SK-N-SH (cell line): ENCODE measurements at regions of chr6 and their contacts with region 1.

Region 1: DNA sequence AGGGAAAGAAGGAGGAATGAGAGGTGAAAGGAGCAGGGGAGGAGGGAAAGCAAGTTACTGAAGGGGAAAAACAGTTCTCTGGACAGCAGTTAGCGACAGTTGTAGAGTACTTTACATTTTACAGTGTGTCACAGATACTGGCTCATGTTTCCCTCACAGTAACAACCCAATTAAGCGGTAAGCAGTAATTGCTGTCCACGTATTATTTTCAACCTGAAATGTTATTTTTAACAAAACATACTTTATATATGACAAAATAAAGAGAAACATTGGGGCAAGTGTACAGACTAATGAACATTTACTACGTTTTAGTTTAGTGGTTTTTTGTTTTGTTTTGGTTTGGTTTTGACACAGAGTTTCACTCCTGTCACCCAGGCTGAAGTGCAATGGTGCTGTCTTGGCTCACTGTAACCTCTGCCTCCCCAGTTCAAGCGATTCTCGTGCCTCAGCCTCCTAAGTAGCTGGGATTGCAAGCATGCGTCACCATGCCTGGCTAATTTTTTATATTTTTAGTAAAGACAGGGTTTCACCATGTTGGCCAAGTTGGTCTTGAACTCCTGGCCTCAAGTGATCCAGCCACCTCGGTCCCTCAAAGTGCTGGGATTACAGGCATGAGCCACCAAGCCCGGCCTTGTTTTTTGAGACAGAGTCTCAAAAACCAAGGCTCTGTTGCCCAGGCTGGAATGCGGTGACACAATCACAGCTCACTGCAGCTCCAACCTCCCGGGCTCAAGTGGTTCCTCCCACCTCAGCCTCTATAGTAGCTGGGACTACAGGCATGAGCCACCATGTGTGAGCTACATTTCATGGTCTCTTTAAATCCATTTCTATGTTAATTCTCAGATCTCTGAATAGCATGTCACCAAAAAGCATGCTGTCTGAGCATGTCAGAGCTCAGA is 22.6 kb upstream of the BTN3A2 start:
- DNase-seq: no peak
- H3K4me3 ChIP-seq: peak overlapping the region; percentile 16 to 48; a peak in 3 of 4 replicates
- H3K27ac ChIP-seq: no peak overlapping the region
- H3K4me1 ChIP-seq: no peaks in the 10 kb centered on the region
- H3K27me3 ChIP-seq: no peaks in the 10 kb centered on the region
- CTCF ChIP-seq: no peak
- EP300 ChIP-seq: no peak
- RAD21 ChIP-seq: no peak

Region 2: GRCh38 chr6:26322645-26323482 is 19.5 kb before region 1 on chr6:
- CTCF ChIA-PET with region 1: interaction called, 16 read pairs
- POLR2A ChIA-PET with region 1: no interaction called
- DNase-seq: peak; percentile 48
- H3K4me3 ChIP-seq: peak overlapping the region; percentile 68 to 72
- H3K27ac ChIP-seq: peak overlapping the region; percentile 36 to 61; a peak in 3 of 4 replicates
- H3K4me1 ChIP-seq: peaks cover 0 to 3% of the 10 kb centered on the region in 2 experiments; a peak in 1 of 4 replicates
- H3K27me3 ChIP-seq: no peaks in the 10 kb centered on the region
- CTCF ChIP-seq: no peak
- EP300 ChIP-seq: no peak; a peak in 1 of 4 replicates
- RAD21 ChIP-seq: no peak

Region 3: DNA sequence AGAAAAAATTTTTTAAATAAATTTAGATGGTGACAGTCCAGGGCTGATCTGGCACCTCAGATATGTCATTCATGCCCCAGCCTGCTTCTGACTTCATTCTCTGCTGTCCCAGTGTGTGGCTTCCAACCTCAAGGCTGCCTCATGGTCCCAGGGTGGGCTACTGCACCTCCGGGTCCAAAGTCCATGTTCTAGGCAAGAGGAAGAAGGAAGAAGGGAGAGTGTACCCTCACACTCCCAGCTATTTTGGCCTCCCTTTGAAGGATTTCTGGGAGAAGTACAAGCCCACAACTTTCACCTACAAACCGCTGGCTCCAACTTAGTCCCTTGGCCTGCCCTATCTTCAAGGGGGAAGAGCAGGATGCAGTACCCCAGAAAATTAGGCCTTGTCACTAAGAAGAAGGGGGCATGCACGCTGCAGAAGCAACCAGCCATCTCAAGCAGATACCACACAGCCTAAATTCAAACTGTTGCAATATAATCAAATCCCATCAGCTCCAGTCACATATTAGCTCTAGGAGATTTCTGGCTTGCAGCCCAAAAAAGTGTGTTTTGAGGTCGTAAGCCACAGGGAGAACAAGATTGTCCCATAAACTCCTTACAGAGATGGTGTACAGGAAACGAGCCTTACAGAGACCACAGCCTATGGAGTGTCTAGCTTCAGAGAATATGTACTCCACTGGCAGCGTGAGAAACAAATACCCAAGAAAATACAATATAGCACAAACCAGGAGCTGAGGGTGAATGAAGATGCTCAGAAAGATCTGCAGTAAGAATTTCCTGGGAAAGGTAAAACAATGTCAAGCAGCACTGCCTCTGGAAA is 21.7 kb after region 1 on chr6:
- CTCF ChIA-PET with region 1: interaction called, 13 read pairs
- POLR2A ChIA-PET with region 1: no interaction called
- DNase-seq: peak; percentile 14
- H3K4me3 ChIP-seq: peak overlapping the region; percentile 56 to 77
- H3K27ac ChIP-seq: peak overlapping the region; percentile 89 to 92
- H3K4me1 ChIP-seq: peaks cover 12 to 16% of the 10 kb centered on the region in 2 experiments; a peak in 3 of 4 replicates
- H3K27me3 ChIP-seq: no peaks in the 10 kb centered on the region
- CTCF ChIP-seq: no peak
- EP300 ChIP-seq: no peak
- RAD21 ChIP-seq: no peak

Region 4: GRCh38 chr6:26520853-26521599 is 178.7 kb after region 1 on chr6:
- CTCF ChIA-PET with region 1: interaction called, 10 read pairs
- POLR2A ChIA-PET with region 1: no interaction called
- DNase-seq: peak; percentile 99
- H3K4me3 ChIP-seq: peak overlapping the region; percentile 44 to 50
- H3K27ac ChIP-seq: peak overlapping the region; percentile 68 to 81
- H3K4me1 ChIP-seq: peaks cover 3 to 5% of the 10 kb centered on the region in 2 experiments; a peak in 2 of 4 replicates
- H3K27me3 ChIP-seq: no peaks in the 10 kb centered on the region
- CTCF ChIP-seq: no peak
- EP300 ChIP-seq: peak in 1 of 2 experiments; percentile 1; a peak in 2 of 4 replicates
- RAD21 ChIP-seq: no peak

Region 5: DNA sequence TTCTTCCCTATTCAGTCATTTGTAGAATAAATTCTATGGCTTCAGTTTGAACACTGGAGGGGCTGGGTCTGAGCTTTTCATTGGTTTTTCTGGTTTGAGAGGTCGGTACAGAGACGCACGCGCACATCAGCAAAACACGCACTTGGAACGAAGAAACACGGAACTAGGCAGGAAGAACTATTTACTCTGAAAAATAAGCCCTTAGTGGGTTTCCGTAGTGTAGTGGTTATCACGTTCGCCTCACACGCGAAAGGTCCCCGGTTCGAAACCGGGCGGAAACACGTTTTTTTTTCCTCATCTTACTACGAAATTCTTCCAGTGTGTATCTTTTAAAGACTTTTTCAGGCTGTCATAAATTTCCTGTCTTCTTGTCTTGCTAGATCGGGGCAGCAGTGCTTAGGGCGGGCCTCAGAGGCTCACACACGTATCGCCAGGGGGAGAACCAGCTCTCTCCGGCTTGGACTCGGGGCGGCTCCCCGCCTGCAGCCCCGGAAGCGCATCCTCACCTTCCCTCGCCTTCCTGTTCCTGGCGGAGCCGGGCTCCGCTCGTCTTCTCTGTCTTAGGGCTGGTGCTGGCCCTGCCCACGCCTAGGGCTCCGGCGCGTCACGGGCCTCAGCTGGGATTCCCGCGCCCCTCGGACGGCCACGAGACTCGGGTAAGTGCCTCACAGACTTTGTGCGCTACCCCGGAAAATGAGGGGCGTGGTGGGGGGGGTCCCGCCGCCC is 195.7 kb after region 1 on chr6 and contains the start of gene HMGN4:
- CTCF ChIA-PET with region 1: interaction called, 21 read pairs
- POLR2A ChIA-PET with region 1: no interaction called
- DNase-seq: peak; percentile 87
- H3K4me3 ChIP-seq: peak within 1 kb of the TSS; percentile 60 to 97
- H3K27ac ChIP-seq: peak within 1 kb of the TSS; percentile 90 to 96
- H3K4me1 ChIP-seq: peaks cover 11 to 17% of the 10 kb centered on the region in 2 experiments
- H3K27me3 ChIP-seq: no peaks in the 10 kb centered on the region
- CTCF ChIP-seq: peak; percentile 17; the same call in 1 of the 2 replicates
- EP300 ChIP-seq: no peak
- RAD21 ChIP-seq: no peak
- polyA plus RNA-seq, gene HMGN4: 76.3 and 79.7 TPM in 2 replicates

Region 6: DNA sequence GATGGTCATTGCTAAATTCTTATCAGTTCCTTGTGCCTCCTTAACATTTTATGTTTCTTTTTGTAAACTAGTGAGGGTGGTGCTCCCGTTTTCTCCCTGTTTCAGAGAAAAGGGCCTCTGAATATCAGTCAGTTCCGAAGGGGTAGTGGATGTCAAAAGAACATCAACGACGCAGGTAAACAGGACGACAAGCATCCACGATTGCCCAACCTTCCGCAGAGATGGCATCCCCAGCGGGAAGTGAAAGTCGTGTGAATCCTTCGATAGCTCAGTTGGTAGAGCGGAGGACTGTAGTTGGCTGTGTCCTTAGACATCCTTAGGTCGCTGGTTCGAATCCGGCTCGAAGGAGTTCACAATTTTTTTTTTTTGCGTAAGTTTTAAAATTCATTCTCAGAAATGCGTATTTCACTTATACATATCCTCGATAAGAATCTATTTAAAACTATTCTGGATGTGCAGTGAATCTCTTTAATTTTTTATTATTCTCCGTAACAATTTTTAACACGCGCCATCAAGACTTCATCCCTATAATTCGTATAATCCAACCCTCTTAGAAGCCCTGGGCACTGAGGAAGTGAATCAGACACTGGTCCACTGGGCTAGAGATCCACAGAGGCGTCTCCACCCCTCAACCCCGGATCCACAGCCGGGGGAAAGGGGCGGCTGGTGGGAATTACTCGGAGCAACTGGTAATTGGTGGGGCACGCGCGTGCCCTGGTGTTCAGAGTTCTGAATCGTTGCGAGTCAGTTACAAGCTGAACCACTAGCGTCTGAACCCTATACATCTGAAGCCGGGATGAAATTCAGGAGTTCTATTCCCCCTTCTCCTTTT is 226.5 kb after region 1 on chr6:
- CTCF ChIA-PET with region 1: interaction called, 51 read pairs
- POLR2A ChIA-PET with region 1: no interaction called
- DNase-seq: peak; percentile 75
- H3K4me3 ChIP-seq: peak overlapping the region; percentile 66 to 83
- H3K27ac ChIP-seq: peak overlapping the region in 1 of 2 experiments; percentile 34; a peak in 3 of 4 replicates
- H3K4me1 ChIP-seq: no peaks in the 10 kb centered on the region; a peak in 1 of 4 replicates
- H3K27me3 ChIP-seq: no peaks in the 10 kb centered on the region
- CTCF ChIP-seq: peak; percentile 41
- EP300 ChIP-seq: no peak
- RAD21 ChIP-seq: peak; percentile 57